ENCODE measurements at regions of chr3 and their contacts with region 1.

Region 1: DNA sequence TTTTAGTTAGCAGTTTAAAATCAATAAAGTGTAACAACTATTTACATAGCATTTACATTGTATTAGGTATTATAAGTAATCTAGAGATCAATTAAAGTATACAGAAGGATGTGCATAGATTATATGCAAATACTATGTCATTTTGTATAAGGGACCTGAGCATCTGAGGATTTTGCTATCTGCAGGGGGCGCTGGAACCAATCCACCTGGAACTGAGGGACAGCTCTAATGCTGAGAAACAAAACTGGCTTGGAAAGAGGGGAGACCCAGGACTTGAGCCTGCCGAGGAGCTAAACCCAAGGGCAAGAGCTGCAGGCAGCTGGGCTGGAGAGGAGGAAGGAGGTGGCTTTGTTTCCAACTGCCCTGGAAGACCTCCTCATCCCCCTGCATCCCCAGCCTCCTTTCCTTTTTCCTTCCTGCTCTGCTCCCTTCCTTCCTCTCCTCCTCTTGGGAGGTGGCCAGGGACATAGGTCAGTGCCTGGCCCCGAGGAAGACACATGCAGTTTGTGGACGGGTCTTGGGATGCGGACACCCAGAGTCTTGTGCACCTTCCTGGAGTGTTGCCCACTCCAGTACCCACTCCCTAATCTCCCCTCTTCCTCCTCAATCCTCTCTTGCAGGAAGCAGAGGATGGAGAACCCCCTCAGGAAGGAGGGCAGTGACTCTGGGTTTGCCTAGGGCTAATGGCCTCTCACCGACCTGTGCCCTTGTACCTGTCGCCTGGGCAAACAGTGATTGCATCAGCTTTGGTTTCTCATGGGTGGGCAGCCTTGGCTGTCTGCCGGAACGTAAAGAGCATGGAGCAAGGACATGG is 828 bp upstream of the RTP3 start:
- DNase-seq: no peak
- ATAC-seq: peak; percentile 34
- H3K4me3 Mint-ChIP-seq: no peak overlapping the region
- H3K27ac Mint-ChIP-seq: no peak overlapping the region
- H3K4me1 Mint-ChIP-seq: peaks cover 28% of the 10 kb centered on the region
- H3K27me3 Mint-ChIP-seq: no peaks in the 10 kb centered on the region
- CTCF ChIP-seq: no peak

Region 2: GRCh38 chr3:46480481-46481195 is 16.3 kb before region 1 on chr3:
- CTCF ChIA-PET with region 1: no interaction called
- POLR2A ChIA-PET with region 1: no interaction called
- intact Hi-C with region 1: no loop called
- DNase-seq: no peak
- ATAC-seq: no peak
- H3K4me3 Mint-ChIP-seq: no peak overlapping the region
- H3K27ac Mint-ChIP-seq: no peak overlapping the region
- H3K4me1 Mint-ChIP-seq: no peaks in the 10 kb centered on the region
- H3K27me3 Mint-ChIP-seq: peaks cover 18% of the 10 kb centered on the region
- CTCF ChIP-seq: no peak

Region 3: DNA sequence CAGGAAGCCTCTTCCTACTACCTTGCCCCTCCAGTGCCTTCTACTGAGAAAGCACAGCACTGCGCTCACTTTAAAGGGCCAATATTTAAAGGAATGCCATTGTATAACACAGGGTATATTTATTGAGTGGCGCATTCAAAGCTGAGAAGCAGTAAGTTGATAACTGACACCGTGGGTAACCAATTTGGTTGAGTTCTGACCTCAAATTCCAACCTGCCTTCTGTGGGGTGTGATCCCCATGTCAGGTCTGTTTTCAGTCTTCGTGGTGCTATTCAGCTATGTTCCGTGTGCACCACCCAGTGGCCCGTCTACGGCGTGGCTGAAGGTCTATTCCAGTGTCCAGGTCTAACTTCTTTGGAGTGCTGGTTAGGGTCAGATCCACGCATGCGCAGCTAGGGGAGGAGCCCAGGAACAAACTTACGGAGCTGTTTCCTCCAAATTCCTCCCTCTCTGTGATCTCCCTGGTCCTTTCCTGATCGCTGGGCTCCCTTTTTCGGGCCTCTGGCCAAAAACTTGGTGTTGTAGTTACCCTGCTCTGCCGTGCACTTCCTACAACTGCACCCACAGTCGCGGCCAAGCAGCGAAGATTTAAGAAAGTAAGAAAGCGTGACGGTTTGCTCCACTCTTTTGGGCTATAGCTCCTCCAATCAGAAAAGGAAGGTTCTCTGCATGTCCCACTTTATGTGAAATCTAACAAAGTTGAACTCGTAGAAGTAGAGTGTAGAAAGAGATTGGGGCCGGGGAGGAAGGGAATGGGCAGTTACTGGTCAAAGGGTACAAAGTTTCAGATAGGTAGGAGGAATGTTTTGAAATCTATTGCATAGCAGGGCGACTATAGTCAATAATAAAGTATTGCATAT is 61.5 kb after region 1 on chr3:
- CTCF ChIA-PET with region 1: interaction called, 229 read pairs
- POLR2A ChIA-PET with region 1: interaction called, 3 read pairs
- intact Hi-C with region 1: loop called (anchors 2 kb)
- DNase-seq: peak; percentile 50
- ATAC-seq: peak; percentile 98
- H3K4me3 Mint-ChIP-seq: peak overlapping the region; percentile 61
- H3K27ac Mint-ChIP-seq: no peak overlapping the region
- H3K4me1 Mint-ChIP-seq: peaks cover 20% of the 10 kb centered on the region
- H3K27me3 Mint-ChIP-seq: peaks cover 1% of the 10 kb centered on the region
- CTCF ChIP-seq: no peak

Region 4: GRCh38 chr3:46717447-46718231 is 220.7 kb after region 1 on chr3 and contains the start of gene PRSS50:
- CTCF ChIA-PET with region 1: no interaction called
- POLR2A ChIA-PET with region 1: no interaction called
- intact Hi-C with region 1: no loop called
- DNase-seq: no peak
- ATAC-seq: no peak
- H3K4me3 Mint-ChIP-seq: no peak within 1 kb of the TSS
- H3K27ac Mint-ChIP-seq: no peak within 1 kb of the TSS
- H3K4me1 Mint-ChIP-seq: peaks cover 2% of the 10 kb centered on the region
- H3K27me3 Mint-ChIP-seq: peaks cover 17% of the 10 kb centered on the region
- CTCF ChIP-seq: no peak
- total RNA-seq, gene PRSS50: not detected in 2 replicates

Measured in activated B cell treated with CpG ODN at 0.5 μM for 24 hours (primary cell).